Activated CD4-positive, alpha-beta memory T cell treated with anti-CD3 and anti-CD28 coated beads for 36 hours (primary cell): ENCODE measurements at regions of chr7 and their contacts with region 1.

Region 1: DNA sequence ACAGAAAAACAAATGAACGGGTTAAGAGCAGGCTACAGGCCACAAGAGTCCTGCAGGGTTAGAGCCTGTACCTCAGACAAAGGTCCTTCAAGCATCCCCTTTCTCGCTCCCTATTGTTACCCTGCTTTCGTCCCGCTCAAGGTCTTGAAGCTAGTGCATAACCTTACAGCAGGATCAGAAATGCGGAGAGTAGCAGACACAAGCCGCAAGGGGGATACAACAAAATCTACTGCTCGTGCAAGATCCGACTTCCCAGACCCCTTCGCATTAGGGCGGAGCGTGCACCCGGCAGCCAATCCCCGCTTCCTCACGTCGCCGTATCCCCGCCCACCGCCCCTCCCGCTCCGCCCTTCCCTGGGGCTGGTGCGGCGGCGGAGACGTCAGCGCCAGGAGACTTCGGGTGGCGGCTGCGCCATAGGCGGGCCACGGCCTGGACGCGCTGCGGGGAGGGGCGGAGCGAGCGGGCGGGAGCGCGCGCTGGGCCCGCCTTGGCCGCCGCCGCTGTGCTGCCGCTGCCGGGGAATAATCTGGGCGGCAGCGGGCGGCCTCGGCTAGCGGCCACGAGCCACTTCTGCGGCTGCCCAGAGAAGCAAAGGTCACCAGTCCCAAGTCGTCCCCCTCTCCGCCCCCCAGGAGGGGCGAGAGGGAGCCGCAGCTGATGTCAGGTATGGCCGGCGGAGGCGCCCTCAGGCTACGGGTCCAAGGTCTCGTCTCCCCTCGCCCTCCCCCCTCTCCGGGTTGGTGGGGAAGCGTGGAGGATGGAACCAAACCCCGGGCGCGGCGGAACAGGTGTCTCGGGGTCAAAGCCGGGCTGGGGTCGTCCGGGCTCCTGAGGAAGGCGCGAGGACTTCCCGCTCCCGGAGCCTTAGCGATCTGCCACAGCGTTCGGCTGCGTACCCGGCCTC is at the start of gene C1GALT1:
- DNase-seq: peak; percentile 98
- H3K4me3 Mint-ChIP-seq: peak within 1 kb of the TSS; percentile 87
- H3K27ac Mint-ChIP-seq: peak within 1 kb of the TSS; percentile 97
- H3K4me1 Mint-ChIP-seq: peaks cover 22% of the 10 kb centered on the region
- H3K27me3 Mint-ChIP-seq: no peaks in the 10 kb centered on the region
- total RNA-seq, gene C1GALT1: 34.1 to 36.7 TPM

Region 2: GRCh38 chr7:6706677-6707544 is 475.5 kb before region 1 on chr7 and contains the start of gene ZNF12:
- CTCF ChIA-PET with region 1: no interaction called
- POLR2A ChIA-PET with region 1: no interaction called
- intact Hi-C with region 1: loop called (anchors 10 kb)
- DNase-seq: peak; percentile 98
- H3K4me3 Mint-ChIP-seq: peak within 1 kb of the TSS; percentile 83
- H3K27ac Mint-ChIP-seq: peak within 1 kb of the TSS; percentile 90
- H3K4me1 Mint-ChIP-seq: peaks cover 38% of the 10 kb centered on the region
- H3K27me3 Mint-ChIP-seq: no peaks in the 10 kb centered on the region
- total RNA-seq, gene ZNF12: 14.9 to 15.2 TPM

Region 3: DNA sequence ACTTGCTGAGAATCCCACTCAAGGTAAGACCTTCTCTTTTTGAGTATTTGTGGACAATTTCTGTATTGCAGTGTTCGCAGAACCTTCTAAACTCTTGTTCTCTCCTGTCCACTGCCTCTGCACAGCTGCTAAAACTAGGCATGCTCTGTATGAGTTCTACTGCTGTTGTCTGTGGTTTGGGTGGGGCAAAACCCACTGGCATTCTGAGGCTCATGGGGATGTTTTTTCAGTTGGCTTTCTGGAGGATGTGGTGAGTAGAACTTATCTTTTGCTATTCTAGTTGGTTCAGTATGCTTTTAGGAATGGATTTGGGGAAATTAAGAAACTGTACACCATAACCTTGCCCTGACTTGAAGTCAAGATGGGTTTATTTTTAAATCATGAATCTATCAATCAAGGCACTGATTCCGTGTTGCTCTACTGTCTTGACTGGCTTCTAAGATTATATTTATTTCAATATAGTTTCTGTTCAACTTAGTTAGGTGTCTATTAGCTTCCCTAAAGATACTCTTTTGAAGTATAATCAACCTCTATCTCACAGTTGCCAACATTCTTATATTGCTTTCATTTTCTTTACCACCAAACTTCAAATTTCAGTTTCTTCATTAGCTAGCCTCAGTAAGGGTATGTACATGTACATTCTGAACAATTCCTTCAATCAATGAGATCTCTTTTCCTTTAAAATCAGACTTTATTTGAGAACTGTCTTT is 25.1 kb before region 1 on chr7:
- CTCF ChIA-PET with region 1: no interaction called
- POLR2A ChIA-PET with region 1: interaction called, 4 read pairs
- intact Hi-C with region 1: loop called (anchors 1 kb)
- DNase-seq: peak; percentile 70
- H3K4me3 Mint-ChIP-seq: peak overlapping the region; percentile 48
- H3K27ac Mint-ChIP-seq: peak overlapping the region; percentile 59
- H3K4me1 Mint-ChIP-seq: peaks cover 44% of the 10 kb centered on the region
- H3K27me3 Mint-ChIP-seq: no peaks in the 10 kb centered on the region

Region 4: GRCh38 chr7:7212612-7213011 is 30.2 kb after region 1 on chr7:
- CTCF ChIA-PET with region 1: no interaction called
- POLR2A ChIA-PET with region 1: no interaction called
- intact Hi-C with region 1: no loop called
- DNase-seq: no peak
- H3K4me3 Mint-ChIP-seq: no peak overlapping the region
- H3K27ac Mint-ChIP-seq: no peak overlapping the region
- H3K4me1 Mint-ChIP-seq: peaks cover 21% of the 10 kb centered on the region
- H3K27me3 Mint-ChIP-seq: no peaks in the 10 kb centered on the region

Region 5: DNA sequence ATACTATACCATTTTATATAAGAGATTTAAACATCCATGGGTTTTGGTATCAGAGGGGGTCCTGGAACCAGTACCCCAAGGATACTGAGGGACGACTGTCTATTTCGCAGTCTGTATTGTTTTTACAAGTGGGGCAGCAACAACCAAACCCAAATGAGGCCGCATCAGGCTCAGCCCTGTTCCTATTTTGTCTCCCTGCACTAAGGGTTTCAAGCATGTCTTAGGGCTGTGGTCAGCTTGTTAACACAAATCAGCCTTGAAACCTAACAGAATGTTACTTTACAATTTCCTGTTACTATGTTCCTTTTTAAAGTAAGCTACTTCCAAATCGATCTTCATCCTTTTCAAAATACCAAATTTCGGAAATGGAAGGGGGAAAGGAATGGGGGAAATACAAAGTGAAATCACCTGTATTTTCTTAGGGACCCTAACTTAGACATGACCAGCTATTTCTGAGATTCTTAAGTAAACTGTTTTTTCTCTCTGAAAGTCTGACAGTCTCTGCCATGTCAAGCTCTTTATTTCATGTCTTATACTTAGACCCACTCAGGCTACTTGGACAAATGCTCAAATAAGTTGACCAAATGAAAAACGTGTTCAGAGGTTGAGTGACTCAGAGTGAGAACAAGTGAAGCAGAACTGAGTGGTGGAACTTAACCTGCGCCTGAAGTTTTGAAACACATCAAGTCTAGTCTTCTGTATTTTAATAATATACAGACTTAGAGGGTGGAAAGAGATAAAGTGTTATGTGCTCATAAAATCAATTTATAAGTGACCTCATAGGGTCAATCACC is 75.7 kb after region 1 on chr7:
- CTCF ChIA-PET with region 1: no interaction called
- POLR2A ChIA-PET with region 1: interaction called, 4 read pairs
- intact Hi-C with region 1: loop called (anchors 1 kb)
- DNase-seq: no peak
- H3K4me3 Mint-ChIP-seq: no peak overlapping the region
- H3K27ac Mint-ChIP-seq: peak overlapping the region; percentile 73
- H3K4me1 Mint-ChIP-seq: peaks cover 21% of the 10 kb centered on the region
- H3K27me3 Mint-ChIP-seq: no peaks in the 10 kb centered on the region

Region 6: GRCh38 chr7:7416031-7416858 is 233.8 kb after region 1 on chr7:
- CTCF ChIA-PET with region 1: no interaction called
- POLR2A ChIA-PET with region 1: no interaction called
- intact Hi-C with region 1: loop called (anchors 1 kb)
- DNase-seq: peak; percentile 38
- H3K4me3 Mint-ChIP-seq: no peak overlapping the region
- H3K27ac Mint-ChIP-seq: peak overlapping the region; percentile 79
- H3K4me1 Mint-ChIP-seq: peaks cover 7% of the 10 kb centered on the region
- H3K27me3 Mint-ChIP-seq: no peaks in the 10 kb centered on the region

Region 7: DNA sequence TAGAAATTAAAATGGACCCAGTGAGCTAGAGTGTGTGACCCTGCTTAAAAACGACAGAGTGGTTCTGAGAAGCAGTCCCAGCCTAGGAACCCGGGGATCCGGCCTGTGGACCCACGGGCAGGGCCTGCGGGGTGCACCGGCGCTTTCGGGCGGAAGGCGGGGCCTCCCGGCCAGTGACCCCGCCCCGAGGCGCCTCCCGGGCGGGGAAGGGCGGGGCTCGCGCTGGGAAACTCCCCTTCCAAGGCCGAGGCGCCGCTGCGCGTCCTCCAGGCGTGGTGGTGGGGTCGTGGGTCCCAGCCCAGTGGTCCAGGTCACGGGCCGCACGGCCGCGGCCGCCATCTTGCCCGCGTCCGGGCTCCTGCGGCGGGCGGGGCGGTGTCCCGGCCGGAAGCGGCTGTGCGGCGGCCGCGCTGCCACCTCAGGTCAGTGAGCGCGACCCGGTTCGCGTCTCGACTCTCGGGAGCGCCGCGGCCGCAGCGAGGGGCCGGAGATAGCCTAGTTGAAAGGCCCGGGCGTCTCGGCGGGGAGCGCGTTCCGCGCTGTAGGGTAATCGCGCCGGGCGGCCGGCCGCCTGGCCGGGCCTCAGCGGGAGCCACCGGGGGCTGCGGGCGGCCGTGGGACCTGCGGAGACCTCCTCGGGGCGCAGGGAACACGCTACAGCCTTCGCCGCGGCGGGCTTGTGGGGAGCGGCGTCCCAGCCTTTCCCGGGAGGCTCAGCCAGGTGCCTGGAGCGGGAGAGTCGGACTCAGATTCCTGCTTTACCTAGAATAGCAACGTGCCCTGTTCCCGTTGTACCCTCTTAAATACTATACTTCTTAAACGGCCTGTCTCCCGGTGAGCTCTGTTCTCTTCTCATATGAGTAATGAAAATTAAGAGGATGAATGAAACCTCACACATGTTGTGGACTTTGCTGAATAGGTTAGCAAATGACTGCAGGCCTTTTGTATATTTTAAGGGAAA is 384.5 kb after region 1 on chr7 and contains the start of gene MIOS:
- CTCF ChIA-PET with region 1: no interaction called
- POLR2A ChIA-PET with region 1: no interaction called
- intact Hi-C with region 1: loop called (anchors 1 kb)
- DNase-seq: peak; percentile 85
- H3K4me3 Mint-ChIP-seq: peak within 1 kb of the TSS; percentile 81
- H3K27ac Mint-ChIP-seq: peak within 1 kb of the TSS; percentile 75
- H3K4me1 Mint-ChIP-seq: peaks cover 29% of the 10 kb centered on the region
- H3K27me3 Mint-ChIP-seq: no peaks in the 10 kb centered on the region
- total RNA-seq, gene MIOS: 37.2 to 37.7 TPM

Region 8: GRCh38 chr7:7761340-7761980 is 579.1 kb after region 1 on chr7:
- CTCF ChIA-PET with region 1: no interaction called
- POLR2A ChIA-PET with region 1: no interaction called
- intact Hi-C with region 1: loop called (anchors 10 kb)
- DNase-seq: no peak
- H3K4me3 Mint-ChIP-seq: peak overlapping the region; percentile 88
- H3K27ac Mint-ChIP-seq: peak overlapping the region; percentile 83
- H3K4me1 Mint-ChIP-seq: peaks cover 32% of the 10 kb centered on the region
- H3K27me3 Mint-ChIP-seq: no peaks in the 10 kb centered on the region